MCF 10A (cell line): ENCODE measurements at regions of chrX and their contacts with region 1.

Region 1: GRCh38 chrX:50691820-50692219 is 122.2 kb downstream of the SHROOM4 start:
- DNase-seq: peak; percentile 65
- H3K4me3 Mint-ChIP-seq: no peak overlapping the region
- H3K27ac Mint-ChIP-seq: no peak overlapping the region
- H3K4me1 Mint-ChIP-seq: no peaks in the 10 kb centered on the region
- H3K27me3 Mint-ChIP-seq: peaks cover 54% of the 10 kb centered on the region
- CTCF ChIP-seq: peak; percentile 70

Region 2: DNA sequence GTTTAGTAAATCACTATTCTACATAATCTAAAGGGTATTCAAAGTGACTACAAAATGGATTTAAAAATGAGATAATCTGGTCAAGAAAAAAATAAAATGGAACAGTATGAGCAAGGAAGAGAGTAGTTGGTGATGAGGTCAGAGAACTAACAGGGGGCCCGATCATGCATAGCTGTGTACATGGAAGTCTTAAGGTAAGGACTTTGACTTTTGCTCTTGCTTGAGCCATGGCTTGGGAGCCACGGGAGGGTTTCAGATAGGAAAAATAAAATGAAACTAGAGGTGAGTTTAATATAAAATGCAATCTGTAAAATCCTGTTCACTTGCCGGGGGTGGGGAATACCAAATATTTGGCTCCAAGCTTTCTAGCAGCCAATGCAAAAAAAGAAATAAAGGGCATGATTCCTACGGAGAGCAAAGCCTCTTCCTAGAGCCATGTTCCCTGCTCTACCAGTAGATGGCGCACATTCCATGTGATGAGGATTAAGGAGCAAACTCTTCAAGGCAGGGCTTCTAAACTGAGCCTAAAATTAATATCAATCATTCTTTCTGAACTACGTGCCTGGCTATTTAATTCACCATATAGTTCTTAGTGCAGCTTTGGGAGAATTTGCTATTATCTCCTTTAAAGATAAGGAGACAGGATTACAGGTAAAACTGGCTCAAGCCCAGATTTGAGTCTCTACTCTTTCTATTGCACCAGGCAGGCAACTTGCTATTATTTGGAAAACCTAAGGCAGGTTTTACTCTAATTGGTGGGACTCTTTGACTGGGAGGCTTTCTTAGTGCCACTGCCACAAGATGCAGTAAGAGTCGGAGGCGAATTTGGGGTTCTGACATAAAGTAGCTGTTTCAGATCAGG is 776.2 kb before region 1 on chrX:
- CTCF ChIA-PET with region 1: interaction called, 3 read pairs
- POLR2A ChIA-PET with region 1: no interaction called
- intact Hi-C with region 1: loop called (anchors 10 kb)
- DNase-seq: peak; percentile 72
- H3K4me3 Mint-ChIP-seq: no peak overlapping the region
- H3K27ac Mint-ChIP-seq: no peak overlapping the region
- H3K4me1 Mint-ChIP-seq: no peaks in the 10 kb centered on the region
- H3K27me3 Mint-ChIP-seq: peaks cover 5% of the 10 kb centered on the region
- CTCF ChIP-seq: peak; percentile 79

Region 3: GRCh38 chrX:50402881-50403280 is 288.9 kb before region 1 on chrX:
- CTCF ChIA-PET with region 1: no interaction called
- POLR2A ChIA-PET with region 1: no interaction called
- intact Hi-C with region 1: no loop called
- DNase-seq: no peak
- H3K4me3 Mint-ChIP-seq: no peak overlapping the region
- H3K27ac Mint-ChIP-seq: no peak overlapping the region
- H3K4me1 Mint-ChIP-seq: no peaks in the 10 kb centered on the region
- H3K27me3 Mint-ChIP-seq: peaks cover 59% of the 10 kb centered on the region
- CTCF ChIP-seq: no peak

Region 4: GRCh38 chrX:50422820-50423219 is 269.0 kb before region 1 on chrX:
- CTCF ChIA-PET with region 1: no interaction called
- POLR2A ChIA-PET with region 1: no interaction called
- intact Hi-C with region 1: no loop called
- DNase-seq: no peak
- H3K4me3 Mint-ChIP-seq: no peak overlapping the region
- H3K27ac Mint-ChIP-seq: no peak overlapping the region
- H3K4me1 Mint-ChIP-seq: no peaks in the 10 kb centered on the region
- H3K27me3 Mint-ChIP-seq: peaks cover 67% of the 10 kb centered on the region
- CTCF ChIP-seq: no peak

Region 5: DNA sequence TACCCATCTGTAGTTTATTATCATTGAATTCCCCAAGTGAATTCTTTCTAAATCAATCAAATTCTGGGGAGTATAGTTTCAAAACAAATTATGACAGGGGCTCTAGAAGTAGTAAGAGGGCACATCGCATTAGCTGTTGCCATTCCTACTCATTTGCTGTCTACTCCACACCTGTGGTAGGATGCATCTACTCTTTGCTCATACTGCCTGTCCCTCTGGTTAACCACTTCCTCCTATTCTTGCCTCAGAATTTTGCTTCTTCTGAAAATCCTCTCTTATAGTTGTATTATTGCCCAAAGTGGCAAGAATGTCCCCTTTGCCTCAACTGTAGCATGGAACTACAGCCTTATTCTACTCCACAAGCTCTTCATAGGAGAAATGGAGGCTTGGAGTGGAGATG is 208.5 kb before region 1 on chrX:
- CTCF ChIA-PET with region 1: no interaction called
- POLR2A ChIA-PET with region 1: no interaction called
- intact Hi-C with region 1: no loop called
- DNase-seq: no peak
- H3K4me3 Mint-ChIP-seq: no peak overlapping the region
- H3K27ac Mint-ChIP-seq: no peak overlapping the region
- H3K4me1 Mint-ChIP-seq: no peaks in the 10 kb centered on the region
- H3K27me3 Mint-ChIP-seq: peaks cover 56% of the 10 kb centered on the region
- CTCF ChIP-seq: no peak

Region 6: GRCh38 chrX:50747471-50747900 is 55.7 kb after region 1 on chrX:
- CTCF ChIA-PET with region 1: interaction called, 16 read pairs
- POLR2A ChIA-PET with region 1: no interaction called
- intact Hi-C with region 1: loop called (anchors 2 kb)
- DNase-seq: peak; percentile 47
- H3K4me3 Mint-ChIP-seq: no peak overlapping the region
- H3K27ac Mint-ChIP-seq: no peak overlapping the region
- H3K4me1 Mint-ChIP-seq: no peaks in the 10 kb centered on the region
- H3K27me3 Mint-ChIP-seq: peaks cover 86% of the 10 kb centered on the region
- CTCF ChIP-seq: peak; percentile 85

Region 7: GRCh38 chrX:50920132-50920531 is 228.3 kb after region 1 on chrX:
- CTCF ChIA-PET with region 1: interaction called, 20 read pairs
- POLR2A ChIA-PET with region 1: no interaction called
- intact Hi-C with region 1: loop called (anchors 1 kb)
- DNase-seq: peak; percentile 42
- H3K4me3 Mint-ChIP-seq: no peak overlapping the region
- H3K27ac Mint-ChIP-seq: no peak overlapping the region
- H3K4me1 Mint-ChIP-seq: no peaks in the 10 kb centered on the region
- H3K27me3 Mint-ChIP-seq: peaks cover 64% of the 10 kb centered on the region
- CTCF ChIP-seq: peak; percentile 53

Region 8: GRCh38 chrX:52261463-52262194 is 1569.8 kb after region 1 on chrX:
- CTCF ChIA-PET with region 1: interaction called, 4 read pairs
- POLR2A ChIA-PET with region 1: no interaction called
- intact Hi-C with region 1: loop called (anchors 5 kb)
- DNase-seq: peak; percentile 87
- H3K4me3 Mint-ChIP-seq: peak overlapping the region; percentile 97
- H3K27ac Mint-ChIP-seq: peak overlapping the region; percentile 99
- H3K4me1 Mint-ChIP-seq: peaks cover 13% of the 10 kb centered on the region
- H3K27me3 Mint-ChIP-seq: peaks cover 46% of the 10 kb centered on the region
- CTCF ChIP-seq: peak; percentile 98